Spleen (tissue), 13 donors: ENCODE measurements at regions of chr18 and their contacts with region 1.

Region 1: GRCh38 chr18:24014062-24014985 is at the start of gene TTC39C:
- DNase-seq: peak; percentile 96
- H3K4me3 ChIP-seq: peak within 1 kb of the TSS; percentile 83 to 91 (median 88)
- H3K27ac ChIP-seq: peak within 1 kb of the TSS; percentile 86 to 94 (median 90)
- H3K4me1 ChIP-seq: peaks cover 47 to 95% (median 83%) of the 10 kb centered on the region in 6 donors
- H3K27me3 ChIP-seq: no peaks in the 10 kb centered on the region
- CTCF ChIP-seq: no peak
- POLR2A ChIP-seq: no peak
- total RNA-seq, gene TTC39C: 23.2 to 52.3 (median 30.4) TPM

Region 2: GRCh38 chr18:24118750-24119577 is 104.6 kb after region 1 on chr18:
- intact Hi-C with region 1: loop called (anchors 10 kb)
- DNase-seq: peak; percentile 81
- H3K4me3 ChIP-seq: no peak overlapping the region
- H3K27ac ChIP-seq: no peak overlapping the region
- H3K4me1 ChIP-seq: peaks cover 0 to 25% (median 9%) of the 10 kb centered on the region in 6 donors
- H3K27me3 ChIP-seq: no peaks in the 10 kb centered on the region
- CTCF ChIP-seq: peak; percentile 79 to 96 (median 93)
- POLR2A ChIP-seq: no peak

Region 3: GRCh38 chr18:24595561-24596031 is 581.3 kb after region 1 on chr18:
- intact Hi-C with region 1: no loop called
- DNase-seq: no peak
- H3K4me3 ChIP-seq: no peak overlapping the region
- H3K27ac ChIP-seq: no peak overlapping the region
- H3K4me1 ChIP-seq: no peaks in the 10 kb centered on the region
- H3K27me3 ChIP-seq: peaks cover 0 to 14% (median 0%) of the 10 kb centered on the region in 7 donors
- CTCF ChIP-seq: no peak
- POLR2A ChIP-seq: no peak